ENCODE measurements at regions of chr4 and their contacts with region 1.

Region 1: GRCh38 chr4:151315212-151315886 is 10.1 kb downstream of the SH3D19 start:
- DNase-seq: peak; percentile 51
- H3K4me3 Mint-ChIP-seq: peak overlapping the region; percentile 27
- H3K27ac Mint-ChIP-seq: peak overlapping the region; percentile 90
- H3K4me1 Mint-ChIP-seq: peaks cover 36% of the 10 kb centered on the region
- H3K27me3 Mint-ChIP-seq: no peaks in the 10 kb centered on the region
- CTCF ChIP-seq: no peak

Region 2: GRCh38 chr4:151304755-151305154 is 10.6 kb before region 1 on chr4:
- CTCF ChIA-PET with region 1: interaction called, 12 read pairs
- POLR2A ChIA-PET with region 1: interaction called, 7 read pairs
- intact Hi-C with region 1: no loop called
- DNase-seq: peak; percentile 37
- H3K4me3 Mint-ChIP-seq: no peak overlapping the region
- H3K27ac Mint-ChIP-seq: no peak overlapping the region
- H3K4me1 Mint-ChIP-seq: peaks cover 9% of the 10 kb centered on the region
- H3K27me3 Mint-ChIP-seq: no peaks in the 10 kb centered on the region
- CTCF ChIP-seq: no peak

Measured in MCF 10A (cell line).